Posterior cingulate gyrus (tissue), 11 donors: ENCODE measurements at regions of chr18 and their contacts with region 1.

Region 1: DNA sequence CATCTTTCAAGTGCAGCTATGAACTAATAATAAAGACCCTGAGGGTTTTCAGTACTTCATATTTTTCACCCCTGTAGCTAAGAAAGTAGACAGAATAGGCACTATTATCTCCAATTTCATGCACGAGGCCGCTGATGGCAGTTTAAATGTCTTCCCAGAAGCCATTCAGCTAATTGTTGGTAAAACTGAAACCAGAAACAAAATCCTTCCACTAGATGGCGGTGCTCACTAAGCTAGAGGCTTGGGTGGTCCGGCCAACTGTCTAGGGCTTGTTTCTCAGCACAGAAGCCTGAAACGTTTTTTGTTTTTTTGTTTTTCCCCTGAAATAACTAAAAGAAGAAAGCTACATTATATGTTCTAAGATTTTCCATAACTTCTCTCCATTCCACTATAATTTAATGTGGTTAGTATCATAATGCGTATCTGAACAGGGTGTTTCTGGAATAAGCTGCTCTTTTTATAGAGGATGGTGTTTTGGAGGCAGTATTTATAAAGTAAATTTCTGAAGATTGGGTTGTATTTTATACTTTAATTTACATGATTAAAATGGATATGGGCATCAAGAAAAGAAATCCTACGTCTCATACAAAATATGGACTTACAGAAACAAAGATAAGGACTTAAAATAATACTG is 159.4 kb downstream of the PIK3C3 start:
- DNase-seq: peak; percentile 20 to 91 (median 68)

Region 2: DNA sequence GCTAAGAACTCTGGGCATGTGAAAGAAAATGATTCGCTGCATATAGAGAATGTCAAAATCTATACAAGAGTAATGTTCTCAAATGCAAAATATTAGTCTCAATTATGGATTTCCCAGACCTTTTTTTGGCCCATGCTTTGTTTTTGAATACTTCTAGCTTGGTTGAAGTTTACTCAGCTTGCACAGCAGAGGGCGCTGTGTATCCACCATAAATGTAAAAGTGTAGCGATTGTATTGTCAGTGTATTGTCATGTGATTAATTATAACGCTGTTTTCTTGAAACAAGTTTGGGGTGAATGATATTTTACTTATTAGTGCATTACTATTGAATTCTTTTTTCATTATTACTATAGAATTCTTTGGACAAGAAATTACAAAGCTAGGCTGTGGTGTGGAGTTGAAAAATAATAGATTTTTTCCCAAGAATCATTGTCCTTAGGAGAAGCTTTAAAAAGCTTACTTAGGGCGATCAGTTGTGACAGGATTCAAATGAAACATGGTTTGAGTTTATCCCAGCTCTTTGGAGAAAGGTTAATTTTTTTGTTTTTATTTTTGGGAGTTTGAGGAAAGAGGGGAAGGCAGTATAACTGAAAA is 61.1 kb before region 1 on chr18:
- intact Hi-C with region 1: loop called (anchors 1 kb)
- DNase-seq: peak in 7 of 10 donors; percentile 22 to 87 (median 54)

Region 3: GRCh38 chr18:42298759-42299675 is 184.6 kb after region 1 on chr18:
- intact Hi-C with region 1: loop called (anchors 2 kb)
- DNase-seq: peak; percentile 77 to 98 (median 88)

Region 4: GRCh38 chr18:43271593-43272432 is 1157.4 kb after region 1 on chr18:
- intact Hi-C with region 1: loop called (anchors 5 kb)
- DNase-seq: peak in 1 of 10 donors; percentile 43

Region 5: GRCh38 chr18:43396266-43396665 is 1281.8 kb after region 1 on chr18:
- intact Hi-C with region 1: loop called (anchors 10 kb)
- DNase-seq: no peak

Region 6: GRCh38 chr18:43571078-43571689 is 1456.8 kb after region 1 on chr18:
- intact Hi-C with region 1: loop called (anchors 5 kb)
- DNase-seq: no peak